Activated naive CD4-positive, alpha-beta T cell treated with anti-CD3 and anti-CD28 coated beads for 36 hours (primary cell): ENCODE measurements at regions of chr5 and their contacts with region 1.

Region 1: DNA sequence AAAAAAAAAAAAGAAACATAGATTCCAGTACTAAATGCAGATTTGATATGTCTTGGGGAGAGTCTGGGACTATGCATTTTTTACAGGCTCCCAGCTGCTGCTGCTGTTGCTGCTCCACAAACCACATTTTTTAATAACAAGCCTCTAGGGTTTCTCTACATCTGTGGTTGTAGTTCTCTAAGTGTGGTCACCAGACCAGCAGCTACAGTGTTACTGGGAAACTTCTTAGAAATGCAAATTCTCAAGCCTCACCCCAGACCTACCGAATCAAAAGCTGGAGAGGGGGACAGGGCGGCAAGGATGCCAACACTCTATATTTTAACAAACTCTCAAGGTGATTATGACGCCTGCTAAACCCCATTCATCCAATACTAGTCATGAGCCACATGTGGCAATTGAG is 293.4 kb upstream of the PTGER4 start:
- DNase-seq: peak; percentile 34
- H3K4me3 Mint-ChIP-seq: no peak overlapping the region
- H3K27ac Mint-ChIP-seq: peak overlapping the region; percentile 85
- H3K4me1 Mint-ChIP-seq: peaks cover 81% of the 10 kb centered on the region
- H3K27me3 Mint-ChIP-seq: no peaks in the 10 kb centered on the region

Region 2: GRCh38 chr5:39650008-39650762 is 736.1 kb before region 1 on chr5:
- CTCF ChIA-PET with region 1: no interaction called
- intact Hi-C with region 1: loop called (anchors 10 kb)
- DNase-seq: no peak
- H3K4me3 Mint-ChIP-seq: no peak overlapping the region
- H3K27ac Mint-ChIP-seq: no peak overlapping the region
- H3K4me1 Mint-ChIP-seq: no peaks in the 10 kb centered on the region
- H3K27me3 Mint-ChIP-seq: peaks cover 13% of the 10 kb centered on the region

Region 3: GRCh38 chr5:40165794-40166728 is 220.2 kb before region 1 on chr5:
- CTCF ChIA-PET with region 1: no interaction called
- intact Hi-C with region 1: loop called (anchors 1 kb)
- DNase-seq: peak; percentile 61
- H3K4me3 Mint-ChIP-seq: no peak overlapping the region
- H3K27ac Mint-ChIP-seq: peak overlapping the region; percentile 14
- H3K4me1 Mint-ChIP-seq: peaks cover 9% of the 10 kb centered on the region
- H3K27me3 Mint-ChIP-seq: no peaks in the 10 kb centered on the region

Region 4: GRCh38 chr5:40240111-40240510 is 146.2 kb before region 1 on chr5:
- CTCF ChIA-PET with region 1: no interaction called
- intact Hi-C with region 1: no loop called
- DNase-seq: peak; percentile 77
- H3K4me3 Mint-ChIP-seq: no peak overlapping the region
- H3K27ac Mint-ChIP-seq: no peak overlapping the region
- H3K4me1 Mint-ChIP-seq: peaks cover 15% of the 10 kb centered on the region
- H3K27me3 Mint-ChIP-seq: no peaks in the 10 kb centered on the region

Region 5: DNA sequence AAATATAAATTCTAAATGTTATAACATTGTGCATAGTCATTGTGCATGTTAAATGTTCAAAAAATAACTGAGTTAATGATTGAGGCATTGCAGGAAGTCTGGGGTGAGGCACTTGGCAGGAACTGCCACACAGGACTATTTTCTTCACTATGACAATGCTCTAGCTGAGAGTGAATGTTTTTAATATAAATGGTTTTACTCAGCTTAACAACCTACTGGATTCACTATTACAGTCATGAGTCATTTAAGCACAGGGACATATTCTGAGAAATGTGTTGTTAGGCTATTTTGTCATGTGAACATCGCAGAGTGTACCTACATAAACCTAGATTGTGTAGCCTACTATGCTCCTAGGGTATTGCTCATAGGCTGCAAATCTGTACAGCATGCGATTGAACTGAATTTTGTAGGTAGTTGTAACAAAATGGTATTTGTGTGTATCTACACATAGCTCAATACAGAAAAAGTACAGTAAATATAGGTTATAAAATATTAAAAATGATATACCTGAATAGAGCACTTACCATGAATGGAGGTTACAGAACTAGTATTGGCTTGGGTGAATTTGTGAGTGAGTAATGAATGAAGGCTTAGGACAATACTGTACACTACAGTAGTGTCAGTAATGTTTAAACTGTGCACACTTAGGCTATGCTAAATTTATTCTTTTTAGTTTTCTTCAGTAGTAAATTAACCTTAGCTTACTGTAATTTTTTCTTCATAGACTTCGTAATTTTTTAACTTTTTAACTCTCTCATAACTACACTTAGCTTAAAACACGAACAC is 52.6 kb before region 1 on chr5:
- CTCF ChIA-PET with region 1: interaction called, 3 read pairs
- intact Hi-C with region 1: loop called (anchors 1 kb)
- DNase-seq: peak; percentile 63
- H3K4me3 Mint-ChIP-seq: no peak overlapping the region
- H3K27ac Mint-ChIP-seq: peak overlapping the region; percentile 41
- H3K4me1 Mint-ChIP-seq: peaks cover 15% of the 10 kb centered on the region
- H3K27me3 Mint-ChIP-seq: peaks cover 3% of the 10 kb centered on the region

Region 6: GRCh38 chr5:40437452-40437861 is 51.2 kb after region 1 on chr5:
- CTCF ChIA-PET with region 1: interaction called, 4 read pairs
- intact Hi-C with region 1: loop called (anchors 1 kb)
- DNase-seq: peak; percentile 19
- H3K4me3 Mint-ChIP-seq: no peak overlapping the region
- H3K27ac Mint-ChIP-seq: peak overlapping the region; percentile 94
- H3K4me1 Mint-ChIP-seq: peaks cover 81% of the 10 kb centered on the region
- H3K27me3 Mint-ChIP-seq: no peaks in the 10 kb centered on the region

Region 7: DNA sequence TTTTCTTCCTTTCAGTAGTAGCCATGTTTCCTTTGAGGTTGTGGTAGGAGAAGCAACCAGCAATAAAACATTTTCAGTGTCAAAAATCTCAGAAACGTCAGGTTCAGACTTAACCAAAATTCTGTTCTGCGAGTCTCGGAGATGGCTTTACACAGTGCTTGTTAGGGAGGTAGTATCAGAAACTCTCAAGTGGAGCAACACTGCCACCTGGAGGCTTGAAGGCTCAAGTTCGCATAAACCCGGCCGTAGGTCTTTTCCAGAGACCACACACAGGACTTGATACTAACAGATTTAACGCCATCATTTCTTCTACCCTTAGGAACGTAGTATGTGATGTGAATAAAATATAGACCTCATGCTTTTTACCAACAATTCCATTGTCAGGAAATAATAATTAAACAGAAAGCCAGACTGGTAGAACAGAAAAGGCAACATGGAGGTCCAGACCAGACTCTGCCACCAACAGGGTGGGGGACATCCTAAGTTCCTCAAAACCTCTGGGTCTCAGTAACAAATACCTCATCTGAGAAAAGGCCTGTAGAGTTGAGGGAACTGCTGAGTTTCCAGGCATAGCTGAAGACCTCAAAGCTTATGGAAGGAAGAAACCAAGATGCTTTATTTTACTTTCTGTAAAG is 302.0 kb after region 1 on chr5:
- CTCF ChIA-PET with region 1: interaction called, 7 read pairs
- intact Hi-C with region 1: loop called (anchors 1 kb)
- DNase-seq: peak; percentile 95
- H3K4me3 Mint-ChIP-seq: peak overlapping the region; percentile 89
- H3K27ac Mint-ChIP-seq: peak overlapping the region; percentile 99
- H3K4me1 Mint-ChIP-seq: peaks cover 64% of the 10 kb centered on the region
- H3K27me3 Mint-ChIP-seq: no peaks in the 10 kb centered on the region